Activated CD8-positive, alpha-beta T cell treated with anti-CD3 and anti-CD28 coated beads for 36 hours (primary cell): ENCODE measurements at regions of chr6 and their contacts with region 1.

Region 1: DNA sequence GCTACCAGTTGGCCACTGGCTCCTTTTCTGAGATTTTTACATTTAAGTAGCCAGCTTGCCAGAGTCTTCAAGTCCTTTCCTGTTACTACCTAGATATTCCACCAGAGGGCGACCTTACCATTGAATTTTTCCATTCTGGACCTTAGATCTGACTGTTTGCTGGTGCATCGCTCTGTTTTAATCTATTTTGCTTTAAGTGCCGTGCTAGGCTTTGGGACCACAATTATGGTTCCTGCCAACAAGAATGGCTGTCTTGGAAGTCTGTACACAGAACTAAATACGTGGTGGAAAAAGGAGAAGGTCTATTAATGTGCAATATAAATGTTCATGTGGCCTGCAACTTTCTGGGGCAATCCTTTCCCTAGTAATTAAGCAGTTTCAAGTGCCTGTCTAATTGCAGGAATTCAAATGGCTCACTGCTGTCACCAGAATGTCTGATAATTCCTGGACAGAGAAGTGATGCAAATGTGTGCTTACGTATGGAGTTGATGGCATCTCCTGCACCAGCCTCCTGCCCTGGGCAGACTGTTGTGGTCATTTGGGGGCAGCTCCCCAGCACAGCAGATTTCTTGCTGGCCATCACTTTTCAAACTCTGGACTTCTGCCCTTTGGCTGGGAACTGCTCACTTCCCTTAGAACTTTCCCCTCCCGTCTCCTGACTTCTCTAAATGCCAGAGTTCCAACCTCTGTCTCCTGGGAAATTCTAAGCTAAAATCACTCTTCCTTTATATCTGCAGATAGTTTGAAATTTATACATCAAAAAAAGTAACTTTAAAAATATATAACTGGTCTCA is 5.6 kb upstream of the HLA-DOA start:
- DNase-seq: peak; percentile 62
- ATAC-seq: peak; percentile 83
- H3K4me3 Mint-ChIP-seq: no peak overlapping the region
- H3K27ac Mint-ChIP-seq: no peak overlapping the region
- H3K4me1 Mint-ChIP-seq: peaks cover 21% of the 10 kb centered on the region
- H3K27me3 Mint-ChIP-seq: no peaks in the 10 kb centered on the region
- CTCF ChIP-seq: peak; percentile 80

Region 2: DNA sequence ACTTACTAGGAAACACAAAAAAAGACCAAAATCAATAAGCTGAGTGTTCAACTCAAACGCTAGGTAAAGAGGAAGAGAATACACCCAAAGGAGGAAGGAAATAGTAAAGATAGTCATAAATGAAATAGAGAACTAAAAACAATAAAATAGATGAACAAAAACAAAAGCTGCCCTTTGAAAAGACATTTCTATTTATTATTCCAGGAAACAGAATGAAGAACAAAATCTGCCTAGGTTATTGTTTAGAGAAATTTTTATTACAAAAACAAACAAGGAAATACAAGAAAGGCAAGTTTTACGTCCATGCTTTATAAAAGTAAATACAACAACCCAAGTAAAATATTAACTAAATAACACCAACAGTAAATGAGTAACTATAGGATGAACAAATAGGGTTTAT is 94.3 kb before region 1 on chr6:
- CTCF ChIA-PET with region 1: no interaction called
- POLR2A ChIA-PET with region 1: no interaction called
- intact Hi-C with region 1: no loop called
- DNase-seq: no peak
- ATAC-seq: no peak
- H3K4me3 Mint-ChIP-seq: no peak overlapping the region
- H3K27ac Mint-ChIP-seq: no peak overlapping the region
- H3K4me1 Mint-ChIP-seq: no peaks in the 10 kb centered on the region
- H3K27me3 Mint-ChIP-seq: no peaks in the 10 kb centered on the region
- CTCF ChIP-seq: no peak

Region 3: GRCh38 chr6:33000055-33000454 is 15.0 kb before region 1 on chr6:
- CTCF ChIA-PET with region 1: interaction called, 31 read pairs
- POLR2A ChIA-PET with region 1: no interaction called
- intact Hi-C with region 1: no loop called
- DNase-seq: peak; percentile 55
- ATAC-seq: peak; percentile 70
- H3K4me3 Mint-ChIP-seq: no peak overlapping the region
- H3K27ac Mint-ChIP-seq: no peak overlapping the region
- H3K4me1 Mint-ChIP-seq: peaks cover 6% of the 10 kb centered on the region
- H3K27me3 Mint-ChIP-seq: peaks cover 11% of the 10 kb centered on the region
- CTCF ChIP-seq: peak; percentile 31

Region 4: DNA sequence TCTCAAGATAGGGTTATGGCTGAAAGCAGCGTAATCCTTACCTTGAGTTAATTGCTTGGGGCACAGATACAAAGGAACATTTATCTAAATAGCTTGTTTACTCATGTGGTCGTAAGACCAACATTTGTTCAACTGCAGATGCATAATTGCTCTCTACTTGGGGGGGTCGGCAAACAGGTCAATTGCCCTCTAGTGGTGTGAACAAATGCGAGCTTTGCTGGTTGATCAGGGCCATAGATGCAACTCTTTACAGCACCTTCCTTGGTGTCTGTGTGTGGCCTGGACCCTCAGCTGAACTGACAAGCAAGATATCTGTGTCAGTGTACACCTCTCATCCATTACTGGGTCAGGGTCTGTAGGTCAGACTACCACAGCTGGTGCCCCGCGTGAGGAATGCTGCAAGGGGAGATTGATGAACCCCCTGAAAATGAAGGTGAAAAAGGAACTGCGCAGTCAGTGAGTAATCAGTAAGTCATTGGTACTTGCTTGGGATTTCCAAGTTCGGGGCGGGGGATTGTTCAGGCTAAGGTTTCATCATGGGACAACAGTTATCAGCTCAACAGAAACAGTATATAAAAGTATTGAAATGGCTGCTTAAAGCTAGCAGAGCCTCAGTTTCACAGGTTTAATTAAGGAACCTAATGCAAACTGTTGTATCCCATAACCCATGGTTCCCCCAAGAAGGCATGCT is 34.4 kb after region 1 on chr6:
- CTCF ChIA-PET with region 1: interaction called, 35 read pairs
- POLR2A ChIA-PET with region 1: no interaction called
- intact Hi-C with region 1: no loop called
- DNase-seq: no peak
- ATAC-seq: no peak
- H3K4me3 Mint-ChIP-seq: no peak overlapping the region
- H3K27ac Mint-ChIP-seq: no peak overlapping the region
- H3K4me1 Mint-ChIP-seq: no peaks in the 10 kb centered on the region
- H3K27me3 Mint-ChIP-seq: peaks cover 30% of the 10 kb centered on the region
- CTCF ChIP-seq: no peak

Region 5: DNA sequence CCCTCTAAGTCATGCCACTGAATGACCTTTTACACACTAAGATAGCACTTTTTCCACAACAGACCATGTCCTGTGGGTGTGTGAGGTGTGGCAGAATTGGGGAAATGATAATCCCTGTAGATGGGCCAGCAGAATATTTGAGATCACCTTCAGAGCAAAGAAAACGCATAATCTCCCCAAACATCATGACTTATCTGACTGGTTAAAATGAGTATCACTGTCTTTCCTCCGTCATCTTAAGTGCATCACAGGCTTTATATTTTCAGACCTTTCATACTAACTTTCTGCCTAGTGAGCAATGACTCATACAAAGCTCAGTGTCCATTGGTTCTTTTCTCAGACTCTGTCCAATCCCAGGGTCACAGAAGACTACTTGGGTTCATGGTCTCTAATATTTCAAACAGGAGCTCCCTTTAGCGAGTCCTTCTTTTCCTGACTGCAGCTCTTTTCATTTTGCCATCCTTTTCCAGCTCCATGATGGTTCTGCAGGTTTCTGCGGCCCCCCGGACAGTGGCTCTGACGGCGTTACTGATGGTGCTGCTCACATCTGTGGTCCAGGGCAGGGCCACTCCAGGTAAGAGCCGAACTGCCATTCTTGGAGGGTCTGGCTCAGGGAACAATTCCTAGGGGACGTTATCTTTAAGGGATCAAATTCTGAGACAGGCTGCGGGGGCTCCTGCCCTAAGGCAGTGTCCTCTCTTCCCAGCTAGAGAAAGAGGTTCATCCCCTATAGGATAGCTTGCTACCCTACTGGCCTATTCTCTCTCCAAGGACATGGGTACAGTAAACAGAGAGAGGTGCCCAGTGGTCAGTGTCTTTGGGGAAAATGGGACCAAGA is 60.7 kb after region 1 on chr6 and contains the start of gene HLA-DPB1:
- CTCF ChIA-PET with region 1: interaction called, 18 read pairs
- POLR2A ChIA-PET with region 1: interaction called, 4 read pairs
- intact Hi-C with region 1: loop called (anchors 5 kb)
- DNase-seq: peak; percentile 25
- ATAC-seq: peak; percentile 94
- H3K4me3 Mint-ChIP-seq: peak within 1 kb of the TSS; percentile 75
- H3K27ac Mint-ChIP-seq: peak within 1 kb of the TSS; percentile 49
- H3K4me1 Mint-ChIP-seq: peaks cover 54% of the 10 kb centered on the region
- H3K27me3 Mint-ChIP-seq: no peaks in the 10 kb centered on the region
- CTCF ChIP-seq: no peak
- total RNA-seq, gene HLA-DPB1: 12.3 to 14.8 TPM

Region 6: DNA sequence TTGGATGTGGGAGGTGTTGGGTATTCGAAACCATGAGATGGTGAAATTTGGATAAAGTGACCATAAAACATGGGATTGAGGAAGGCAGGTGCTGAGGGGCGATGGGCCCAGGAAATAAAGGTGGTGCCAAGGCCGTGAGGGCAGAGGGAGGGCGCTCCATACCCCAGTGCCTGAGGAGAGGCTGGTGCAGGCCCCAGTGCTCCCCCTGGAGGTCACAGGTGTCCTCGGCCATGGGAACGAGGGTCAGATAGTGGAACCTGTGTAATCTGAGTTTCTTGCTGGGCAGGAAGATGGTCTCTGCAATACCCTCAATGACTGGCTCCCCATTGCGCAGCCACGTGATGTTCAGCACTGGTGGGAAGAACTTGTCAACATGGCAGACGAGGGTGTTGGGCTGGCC is 76.9 kb after region 1 on chr6:
- CTCF ChIA-PET with region 1: interaction called, 42 read pairs
- POLR2A ChIA-PET with region 1: no interaction called
- intact Hi-C with region 1: loop called (anchors 2 kb)
- DNase-seq: peak; percentile 84
- ATAC-seq: peak; percentile 99
- H3K4me3 Mint-ChIP-seq: no peak overlapping the region
- H3K27ac Mint-ChIP-seq: no peak overlapping the region
- H3K4me1 Mint-ChIP-seq: no peaks in the 10 kb centered on the region
- H3K27me3 Mint-ChIP-seq: peaks cover 2% of the 10 kb centered on the region
- CTCF ChIP-seq: peak; percentile 86

Region 7: GRCh38 chr6:33126101-33126714 is 111.2 kb after region 1 on chr6:
- CTCF ChIA-PET with region 1: interaction called, 27 read pairs
- POLR2A ChIA-PET with region 1: no interaction called
- intact Hi-C with region 1: no loop called
- DNase-seq: peak; percentile 86
- ATAC-seq: peak; percentile 56
- H3K4me3 Mint-ChIP-seq: no peak overlapping the region
- H3K27ac Mint-ChIP-seq: no peak overlapping the region
- H3K4me1 Mint-ChIP-seq: no peaks in the 10 kb centered on the region
- H3K27me3 Mint-ChIP-seq: peaks cover 3% of the 10 kb centered on the region
- CTCF ChIP-seq: peak; percentile 71

Region 8: GRCh38 chr6:33147807-33148666 is 133.0 kb after region 1 on chr6:
- CTCF ChIA-PET with region 1: interaction called, 11 read pairs
- POLR2A ChIA-PET with region 1: no interaction called
- intact Hi-C with region 1: no loop called
- DNase-seq: no peak
- ATAC-seq: no peak
- H3K4me3 Mint-ChIP-seq: no peak overlapping the region
- H3K27ac Mint-ChIP-seq: no peak overlapping the region
- H3K4me1 Mint-ChIP-seq: no peaks in the 10 kb centered on the region
- H3K27me3 Mint-ChIP-seq: peaks cover 18% of the 10 kb centered on the region
- CTCF ChIP-seq: peak; percentile 78